ENCODE measurements at regions of chr20 and their contacts with region 1.

Region 1: GRCh38 chr20:63973636-63974402 is 4.1 kb upstream of the ZNF512B start:
- DNase-seq: peak; percentile 90 to 94 (median 90)
- ATAC-seq: peak; percentile 72 to 87 (median 82)
- H3K4me3 ChIP-seq: peak overlapping the region in 9 of 12 donors; percentile 23 to 46 (median 39)
- H3K27ac ChIP-seq: peak overlapping the region in 9 of 12 donors; percentile 1 to 72 (median 36)
- H3K4me1 ChIP-seq: peaks cover 0 to 43% (median 26%) of the 10 kb centered on the region in 12 donors
- H3K27me3 ChIP-seq: no peaks in the 10 kb centered on the region
- CTCF ChIP-seq: peak; percentile 98 to 100 (median 99)
- POLR2A ChIP-seq: no peak

Region 2: DNA sequence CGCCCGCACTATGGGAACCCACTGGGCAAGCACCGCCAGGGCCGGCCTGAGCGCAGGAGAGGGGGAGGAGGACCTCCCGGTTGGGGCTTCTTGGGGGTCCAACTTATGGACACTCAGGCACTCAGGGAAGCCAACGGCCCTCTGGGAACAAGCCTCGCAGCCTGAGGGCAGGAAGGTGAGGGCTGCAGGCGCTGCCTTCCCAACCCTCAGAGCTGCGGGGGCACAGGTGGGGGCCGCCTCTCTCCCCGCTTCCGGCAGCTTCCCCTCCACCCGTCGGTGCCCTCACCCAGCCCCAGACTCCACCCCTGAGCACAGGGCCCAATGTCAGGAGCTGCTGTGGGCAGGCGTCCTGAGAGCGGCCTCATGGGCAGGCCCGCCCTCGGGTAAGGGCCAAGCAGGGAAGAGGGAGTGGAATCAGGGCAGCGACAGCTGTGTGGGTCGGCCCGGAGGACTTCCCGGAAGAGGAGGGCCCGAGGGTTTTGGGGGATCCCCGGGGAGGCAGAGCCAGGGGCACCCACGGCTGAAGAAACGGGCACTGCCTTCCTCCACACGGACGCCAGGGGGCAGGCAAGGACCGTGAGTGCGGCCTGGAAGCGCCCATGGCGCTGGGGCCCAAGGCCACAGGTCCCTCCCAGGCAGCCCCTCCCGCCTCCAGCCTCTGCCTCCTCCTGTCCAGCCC is 436.2 kb before region 1 on chr20:
- intact Hi-C with region 1: loop called (anchors 1 to 5 kb)
- DNase-seq: peak; percentile 80 to 95 (median 87)
- ATAC-seq: peak; percentile 84 to 90 (median 87)
- H3K4me3 ChIP-seq: peak overlapping the region in 10 of 12 donors; percentile 15 to 51 (median 38)
- H3K27ac ChIP-seq: peak overlapping the region in 7 of 12 donors; percentile 12 to 91 (median 39)
- H3K4me1 ChIP-seq: peaks cover 0 to 28% (median 13%) of the 10 kb centered on the region in 12 donors
- H3K27me3 ChIP-seq: peaks cover 0 to 41% (median 2%) of the 10 kb centered on the region in 9 donors
- CTCF ChIP-seq: peak; percentile 94 to 98 (median 96)
- POLR2A ChIP-seq: no peak

Region 3: GRCh38 chr20:63698739-63699465 is 274.9 kb before region 1 on chr20:
- intact Hi-C with region 1: loop called in 1 of 10 experiments (anchors 10 kb)
- DNase-seq: peak in 4 of 5 donors; percentile 44 to 89 (median 68)
- ATAC-seq: peak in 3 of 4 donors; percentile 15 to 68 (median 55)
- H3K4me3 ChIP-seq: no peak overlapping the region
- H3K27ac ChIP-seq: peak overlapping the region in 11 of 12 donors; percentile 21 to 89 (median 50)
- H3K4me1 ChIP-seq: peaks cover 11 to 52% (median 38%) of the 10 kb centered on the region in 12 donors
- H3K27me3 ChIP-seq: no peaks in the 10 kb centered on the region
- CTCF ChIP-seq: no peak
- POLR2A ChIP-seq: no peak

Region 4: DNA sequence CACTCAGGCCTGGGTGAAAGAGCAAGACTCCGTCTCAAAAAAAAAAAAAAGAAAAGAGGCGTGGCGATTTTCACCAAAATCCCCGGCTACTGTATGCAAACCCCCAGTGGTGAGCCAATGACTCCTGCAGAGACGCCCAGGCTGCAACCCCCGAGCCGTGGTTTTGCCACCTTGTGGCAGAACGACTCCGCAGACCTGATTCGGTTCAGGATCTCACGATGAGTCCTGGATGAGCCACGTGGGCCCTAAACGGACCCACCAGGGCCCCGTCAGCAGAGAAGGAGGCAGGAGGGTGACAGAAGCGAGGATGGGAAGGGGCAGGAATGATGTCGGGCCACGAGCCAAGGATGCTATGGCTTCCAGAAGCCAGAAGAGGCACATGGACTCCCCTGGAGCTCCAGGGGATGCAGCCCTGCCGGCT is 191.8 kb before region 1 on chr20:
- intact Hi-C with region 1: loop called in 6 of 10 experiments (anchors 10 kb)
- DNase-seq: peak in 1 of 5 donors; percentile 58
- ATAC-seq: no peak
- H3K4me3 ChIP-seq: no peak overlapping the region
- H3K27ac ChIP-seq: no peak overlapping the region
- H3K4me1 ChIP-seq: peaks cover 0 to 22% (median 15%) of the 10 kb centered on the region in 12 donors
- H3K27me3 ChIP-seq: no peaks in the 10 kb centered on the region
- CTCF ChIP-seq: no peak
- POLR2A ChIP-seq: no peak

Region 5: DNA sequence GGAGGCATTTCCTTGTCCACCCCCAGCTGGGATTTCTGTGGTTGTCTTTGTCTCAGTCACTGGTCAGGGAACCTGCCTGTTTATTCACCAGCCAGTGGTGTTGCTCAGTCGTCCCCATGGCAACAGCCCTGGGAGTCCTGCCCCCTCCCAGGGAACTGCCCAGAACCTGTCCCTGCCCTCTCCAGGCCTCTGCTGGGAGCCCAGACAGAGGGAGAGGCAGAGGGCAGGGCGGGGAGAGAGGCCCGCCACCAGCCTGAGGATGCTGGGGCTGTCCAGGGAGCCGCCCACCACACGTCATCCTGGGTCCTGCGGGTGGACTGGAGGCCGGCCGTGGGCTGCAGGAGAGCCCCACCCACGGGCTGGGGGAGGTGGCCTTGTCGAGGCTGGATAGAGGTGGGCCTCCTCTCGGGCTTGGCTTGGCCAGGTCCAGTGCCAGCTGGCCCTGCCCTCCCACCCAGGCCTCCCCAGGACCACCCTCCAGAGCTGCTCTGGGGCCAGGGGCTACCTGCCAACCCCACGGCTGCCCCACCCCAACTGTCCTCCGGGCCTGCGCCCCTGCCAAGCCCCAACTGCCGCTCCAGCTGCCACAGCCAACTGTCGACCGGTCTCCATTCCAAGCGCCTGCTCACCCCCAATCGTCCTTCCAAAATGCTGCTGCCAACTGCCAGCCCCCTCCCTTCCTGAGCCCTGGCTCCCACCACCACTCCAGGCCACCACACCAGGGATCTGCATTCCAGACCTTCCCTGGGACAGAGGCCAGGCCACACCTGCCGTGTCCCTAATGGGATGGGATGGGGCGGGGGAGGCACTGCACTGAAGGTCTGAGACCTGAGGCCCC is 138.6 kb before region 1 on chr20:
- intact Hi-C with region 1: no loop called
- DNase-seq: peak; percentile 88 to 96 (median 92)
- ATAC-seq: peak; percentile 85 to 94 (median 92)
- H3K4me3 ChIP-seq: peak overlapping the region in 1 of 12 donors; percentile 13
- H3K27ac ChIP-seq: peak overlapping the region in 11 of 12 donors; percentile 32 to 86 (median 70)
- H3K4me1 ChIP-seq: peaks cover 13 to 43% (median 35%) of the 10 kb centered on the region in 12 donors
- H3K27me3 ChIP-seq: peaks cover 0 to 17% (median 0%) of the 10 kb centered on the region in 9 donors
- CTCF ChIP-seq: no peak
- POLR2A ChIP-seq: peak in 1 of 2 donors; percentile 16

Region 6: DNA sequence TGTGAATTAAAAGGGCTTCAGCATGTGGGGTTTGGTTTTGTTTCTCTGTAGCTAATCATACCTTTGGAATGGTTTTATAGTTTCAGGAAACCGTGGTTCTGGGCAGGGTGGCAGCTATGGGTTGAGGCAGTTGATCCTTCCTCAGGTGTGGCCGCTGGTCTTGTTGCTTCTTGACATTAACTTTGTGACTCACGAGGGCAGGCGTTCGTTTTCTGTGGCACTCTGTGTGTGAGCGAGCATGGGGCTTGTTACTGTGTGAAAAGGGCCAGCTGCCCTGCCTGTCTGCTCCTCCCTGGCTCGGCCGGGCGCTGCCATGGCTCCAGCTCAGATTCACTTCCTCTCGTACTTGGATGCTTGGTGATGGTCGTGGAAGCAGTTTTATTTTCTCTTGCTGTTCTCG is 62.6 kb before region 1 on chr20:
- intact Hi-C with region 1: loop called in 9 of 10 experiments (anchors 1 to 10 kb)
- DNase-seq: no peak
- ATAC-seq: peak in 3 of 4 donors; percentile 12 to 39 (median 22)
- H3K4me3 ChIP-seq: no peak overlapping the region
- H3K27ac ChIP-seq: peak overlapping the region in 2 of 12 donors; percentile 9 to 33
- H3K4me1 ChIP-seq: peaks cover 0 to 68% (median 24%) of the 10 kb centered on the region in 12 donors
- H3K27me3 ChIP-seq: no peaks in the 10 kb centered on the region
- CTCF ChIP-seq: no peak
- POLR2A ChIP-seq: no peak

Measured in heart left ventricle (tissue), 16 donors.